Activated CD4-positive, alpha-beta T cell treated with anti-CD3 and anti-CD28 coated beads, Interleukin-2, amount 10 ng/mL, durations not matched to agents 24 days and 14 days (primary cell): ENCODE measurements at regions of chr6 and their contacts with region 1.

Region 1: GRCh38 chr6:44642870-44643529 is 255.5 kb downstream of the CDC5L start:
- DNase-seq: peak; percentile 74
- H3K4me3 Mint-ChIP-seq: peak overlapping the region; percentile 7
- H3K27ac Mint-ChIP-seq: peak overlapping the region; percentile 84
- H3K4me1 Mint-ChIP-seq: peaks cover 17% of the 10 kb centered on the region
- H3K27me3 Mint-ChIP-seq: no peaks in the 10 kb centered on the region

Region 2: DNA sequence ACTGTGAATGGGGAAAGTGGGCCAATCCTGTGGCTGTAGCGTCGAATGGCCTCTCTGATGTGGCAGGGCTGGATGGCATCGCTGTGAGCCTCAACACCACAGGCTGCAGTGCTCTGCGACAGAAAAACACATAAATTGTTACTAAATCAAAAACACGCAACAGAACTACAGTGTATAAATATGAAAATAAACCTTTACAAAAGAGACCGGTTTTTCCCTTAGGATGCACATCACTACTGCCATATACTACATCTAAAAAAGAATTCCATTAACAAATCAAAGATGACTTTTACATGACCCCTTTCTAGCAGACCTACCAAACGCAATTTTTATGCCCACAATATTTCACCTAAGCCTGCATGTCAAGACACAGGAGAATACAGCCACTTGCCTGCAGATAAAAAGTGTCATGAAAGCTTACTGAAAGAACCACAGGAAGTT is 289.7 kb after region 1 on chr6:
- intact Hi-C with region 1: loop called (anchors 5 kb)
- DNase-seq: peak; percentile 80
- H3K4me3 Mint-ChIP-seq: peak overlapping the region; percentile 89
- H3K27ac Mint-ChIP-seq: peak overlapping the region; percentile 96
- H3K4me1 Mint-ChIP-seq: peaks cover 42% of the 10 kb centered on the region
- H3K27me3 Mint-ChIP-seq: no peaks in the 10 kb centered on the region